Common myeloid progenitor, CD34-positive (primary cell): ENCODE measurements at regions of chr15 and their contacts with region 1.

Region 1: DNA sequence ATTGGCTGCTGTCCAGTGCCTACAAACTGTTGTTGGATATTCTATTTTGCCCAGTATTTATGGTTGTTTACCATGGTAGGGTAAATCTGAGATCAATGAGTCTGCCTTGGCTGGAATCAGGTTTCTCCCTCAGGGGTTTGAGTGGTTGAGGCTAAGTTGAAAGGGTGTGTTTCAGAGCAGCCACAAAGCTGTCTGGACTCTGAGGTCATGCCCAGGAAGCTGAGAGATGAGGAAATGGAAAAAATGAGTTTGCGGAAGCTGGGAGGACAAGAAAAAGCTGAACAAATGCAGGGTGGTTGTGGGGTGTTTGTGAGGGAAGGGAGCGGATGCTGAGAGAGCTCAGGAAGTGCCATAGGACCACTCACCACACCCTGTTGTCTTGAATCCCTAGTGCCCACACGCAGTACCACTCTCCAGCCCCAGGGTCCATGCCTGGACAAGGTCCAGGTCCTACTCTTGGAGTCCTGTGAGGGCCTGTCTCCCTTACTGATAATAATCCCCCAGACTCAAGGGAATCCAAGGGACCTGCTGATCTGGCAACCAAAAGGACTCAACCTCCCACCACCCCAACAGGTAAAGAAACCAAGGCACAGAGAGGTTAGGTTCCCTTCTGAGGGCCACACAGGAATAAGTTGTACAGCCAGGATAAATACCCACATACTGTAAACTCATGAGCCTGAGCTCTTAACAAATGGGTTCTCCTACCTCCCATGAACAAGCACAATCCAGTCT is 81.6 kb downstream of the PPCDC start:
- DNase-seq: peak; percentile 84 to 95 (median 95)
- H3K4me3 ChIP-seq: peak overlapping the region in 3 of 7 experiments; percentile 5 to 28 (median 22)
- H3K27ac ChIP-seq: peak overlapping the region; percentile 38 to 55
- H3K4me1 ChIP-seq: peaks cover 21 to 56% (median 43%) of the 10 kb centered on the region in 4 experiments
- H3K27me3 ChIP-seq: no peaks in the 10 kb centered on the region

Region 2: DNA sequence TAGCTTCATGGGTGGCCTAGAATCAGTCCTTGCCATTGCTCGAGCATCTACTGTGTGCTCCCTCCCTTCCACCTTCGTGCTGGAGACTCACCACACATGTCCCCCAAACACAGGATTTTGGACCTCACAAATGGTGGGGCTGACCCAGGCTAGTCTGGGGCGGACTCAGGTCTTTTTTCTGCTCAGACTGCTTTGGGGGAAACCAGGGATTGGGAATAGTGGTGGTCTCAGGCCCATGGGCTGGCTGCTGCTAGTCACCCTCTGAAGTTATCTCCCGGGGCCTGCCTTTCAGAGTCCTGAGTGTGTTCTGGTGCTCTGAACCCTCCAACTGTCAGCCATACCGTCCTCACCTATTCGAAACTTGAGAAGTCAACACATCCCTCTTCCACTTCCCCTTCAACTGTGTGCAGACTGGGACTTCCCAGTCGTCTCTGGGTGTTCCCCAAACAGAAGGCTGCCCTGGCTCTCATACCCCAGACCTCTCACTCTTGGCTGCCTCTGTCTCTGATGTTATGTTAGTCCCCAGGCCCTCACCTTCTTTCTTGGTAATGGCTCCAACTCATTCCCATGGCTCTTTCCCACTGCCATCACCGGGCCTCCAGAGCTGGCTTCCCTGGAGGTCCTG is 35.6 kb before region 1 on chr15:
- CTCF ChIA-PET with region 1: interaction called, 14 read pairs
- POLR2A ChIA-PET with region 1: interaction called, 3 read pairs
- DNase-seq: peak; percentile 46 to 80 (median 79)
- H3K4me3 ChIP-seq: no peak overlapping the region
- H3K27ac ChIP-seq: no peak overlapping the region
- H3K4me1 ChIP-seq: peaks cover 12 to 76% (median 36%) of the 10 kb centered on the region in 4 experiments
- H3K27me3 ChIP-seq: no peaks in the 10 kb centered on the region

Region 3: DNA sequence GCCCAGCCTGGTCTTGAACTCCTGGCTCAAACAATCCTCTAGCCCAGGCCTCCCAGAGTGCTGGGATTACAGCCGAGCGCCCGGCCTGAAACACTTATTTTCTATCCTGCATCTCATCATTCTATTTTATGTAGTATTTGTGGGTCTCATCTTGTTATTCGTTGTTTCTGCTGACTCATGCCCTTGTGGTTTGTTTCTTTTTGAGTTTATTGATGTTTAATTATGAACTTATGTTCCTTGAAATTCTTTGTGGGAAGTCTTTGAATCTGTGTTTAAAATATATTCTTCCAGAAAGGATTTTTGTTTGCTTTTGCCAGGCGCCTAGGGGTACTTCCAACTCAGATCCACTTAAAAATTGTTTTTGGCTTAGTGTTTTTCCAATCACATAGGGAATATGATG is 18.4 kb after region 1 on chr15:
- CTCF ChIA-PET with region 1: interaction called, 37 read pairs
- POLR2A ChIA-PET with region 1: interaction called, 9 read pairs
- DNase-seq: peak; percentile 46 to 86 (median 86)
- H3K4me3 ChIP-seq: peak overlapping the region in 1 of 7 experiments; percentile 13
- H3K27ac ChIP-seq: peak overlapping the region in 1 of 2 experiments; percentile 85
- H3K4me1 ChIP-seq: peaks cover 12 to 46% (median 30%) of the 10 kb centered on the region in 4 experiments
- H3K27me3 ChIP-seq: no peaks in the 10 kb centered on the region

Region 4: DNA sequence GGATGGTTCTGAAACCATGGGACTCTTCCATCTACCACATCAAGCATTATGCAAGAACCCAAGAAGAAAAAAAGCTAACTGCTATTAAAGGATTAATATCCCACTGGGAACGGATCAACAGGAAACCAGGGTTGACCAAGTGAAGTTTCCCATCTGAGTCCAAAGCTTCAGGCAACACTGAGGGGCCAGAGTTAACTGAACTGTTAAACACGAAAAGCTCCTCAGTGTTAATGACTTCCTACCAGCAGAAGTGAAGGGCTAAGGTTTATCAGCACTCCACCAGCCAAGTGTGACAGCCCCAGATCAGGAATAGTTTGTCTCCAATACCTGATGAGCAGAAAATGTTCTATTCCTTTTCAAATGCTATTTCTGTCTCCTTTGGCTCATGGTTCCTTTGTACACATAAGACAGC is 437.4 kb after region 1 on chr15:
- CTCF ChIA-PET with region 1: no interaction called
- POLR2A ChIA-PET with region 1: no interaction called
- DNase-seq: peak in 1 of 3 donors; percentile 7
- H3K4me3 ChIP-seq: no peak overlapping the region
- H3K27ac ChIP-seq: no peak overlapping the region
- H3K4me1 ChIP-seq: no peaks in the 10 kb centered on the region
- H3K27me3 ChIP-seq: no peaks in the 10 kb centered on the region